PC-9 (cell line): ENCODE measurements at regions of chr11 and their contacts with region 1.

Region 1: DNA sequence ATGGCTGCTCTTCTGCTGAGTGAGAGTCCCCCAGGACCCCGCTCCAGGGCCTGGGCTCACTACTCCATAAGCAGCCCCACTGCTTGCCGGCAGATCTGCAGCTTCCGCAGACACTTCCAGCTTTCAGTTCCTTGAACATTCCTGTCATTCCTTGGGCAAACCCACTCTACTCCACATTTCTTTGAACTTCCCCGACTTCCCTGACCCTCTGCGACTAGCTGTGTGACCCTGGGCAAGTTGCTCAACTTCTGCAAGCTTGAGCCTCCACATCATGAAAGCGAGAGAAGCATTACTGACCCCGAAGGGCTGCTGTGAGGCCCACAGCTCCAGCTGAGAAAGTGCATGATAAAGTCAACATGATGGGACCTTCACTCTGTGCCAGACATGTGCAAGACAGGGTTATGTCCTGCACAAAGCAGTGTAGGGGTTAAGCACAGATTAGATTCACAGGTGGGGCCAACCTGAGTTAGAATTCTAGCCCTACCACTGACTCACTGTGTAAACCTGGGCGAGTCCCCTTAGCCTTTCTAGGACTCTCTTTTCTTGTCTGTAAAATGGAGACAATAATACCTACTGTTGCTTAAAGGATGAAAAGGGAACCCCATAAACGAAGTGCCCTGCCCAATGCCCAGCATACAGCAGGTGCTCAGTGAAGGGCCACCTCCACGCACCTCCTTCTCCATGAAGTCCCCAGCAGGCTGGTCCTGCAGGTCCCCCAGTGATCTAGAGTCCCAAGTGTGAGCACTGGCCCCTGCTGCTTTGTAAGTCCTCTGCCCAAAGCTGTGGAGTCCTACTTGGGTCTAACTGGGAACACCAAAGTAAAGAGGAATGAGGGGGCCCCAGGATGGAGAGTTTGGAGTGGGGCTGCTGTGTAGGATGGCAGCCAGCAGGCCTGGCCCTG is 51.6 kb downstream of the THAP12 start:
- DNase-seq: no peak
- H3K4me3 ChIP-seq: no peak overlapping the region
- H3K27ac ChIP-seq: no peak overlapping the region
- H3K4me1 ChIP-seq: no peaks in the 10 kb centered on the region
- H3K27me3 ChIP-seq: no peaks in the 10 kb centered on the region
- CTCF ChIP-seq: no peak

Region 2: GRCh38 chr11:76512851-76513653 is 183.7 kb after region 1 on chr11:
- CTCF ChIA-PET with region 1: no interaction called
- POLR2A ChIA-PET with region 1: no interaction called
- intact Hi-C with region 1: loop called (anchors 10 kb)
- DNase-seq: peak in 1 of 2 experiments; percentile 38
- H3K4me3 ChIP-seq: no peak overlapping the region
- H3K27ac ChIP-seq: 0 out of 2 replicates have a peak overlapping the region, but pooled peaks have one; percentile 8
- H3K4me1 ChIP-seq: no peaks in the 10 kb centered on the region
- H3K27me3 ChIP-seq: no peaks in the 10 kb centered on the region
- CTCF ChIP-seq: peak; percentile 69

Region 3: DNA sequence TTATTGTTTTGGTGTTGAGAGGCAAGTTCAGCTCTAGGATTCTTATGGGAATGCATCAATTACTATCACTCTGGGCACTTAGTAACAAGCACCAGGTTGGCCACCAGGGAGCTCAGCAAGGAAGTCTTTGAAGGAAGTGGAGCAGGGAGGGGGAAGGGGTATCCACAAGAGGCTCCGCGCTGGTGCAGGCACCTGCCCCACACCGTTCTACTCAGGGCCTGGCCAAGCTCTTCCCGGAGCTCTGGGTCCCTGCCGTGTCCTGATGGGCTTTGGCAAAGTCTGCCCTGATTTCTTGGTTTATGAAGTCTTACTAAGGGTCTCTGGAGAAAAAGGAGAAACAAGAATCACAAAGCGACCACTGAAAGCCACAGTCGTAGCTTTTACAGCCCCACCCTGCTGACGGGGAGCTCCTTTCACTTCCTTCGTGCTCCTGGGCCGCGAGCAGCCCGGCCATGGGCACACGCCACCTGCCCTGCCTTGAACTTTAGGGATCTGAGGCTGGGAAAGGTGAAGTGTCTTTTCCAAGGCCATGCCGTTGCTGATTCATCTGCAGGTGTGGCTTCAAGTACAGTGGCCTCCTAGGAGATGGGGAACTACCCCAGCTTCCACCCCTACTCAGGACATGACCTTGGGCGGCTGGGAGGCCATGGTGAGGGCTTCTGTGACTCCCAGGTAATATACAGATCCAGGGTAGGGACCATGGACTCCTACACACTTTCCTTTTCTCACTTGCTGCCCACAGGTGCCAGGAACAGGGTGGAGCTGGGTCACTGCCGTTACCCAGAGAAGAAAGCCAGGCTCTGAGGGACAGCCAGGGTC is 357.1 kb after region 1 on chr11:
- CTCF ChIA-PET with region 1: no interaction called
- POLR2A ChIA-PET with region 1: no interaction called
- intact Hi-C with region 1: no loop called
- DNase-seq: no peak
- H3K4me3 ChIP-seq: no peak overlapping the region
- H3K27ac ChIP-seq: no peak overlapping the region
- H3K4me1 ChIP-seq: no peaks in the 10 kb centered on the region
- H3K27me3 ChIP-seq: no peaks in the 10 kb centered on the region
- CTCF ChIP-seq: no peak

Region 4: GRCh38 chr11:78179459-78180069 is 1850.2 kb after region 1 on chr11:
- CTCF ChIA-PET with region 1: no interaction called
- POLR2A ChIA-PET with region 1: no interaction called
- intact Hi-C with region 1: no loop called
- DNase-seq: peak; percentile 66 to 86
- H3K4me3 ChIP-seq: no peak overlapping the region
- H3K27ac ChIP-seq: no peak overlapping the region
- H3K4me1 ChIP-seq: peaks cover 11% of the 10 kb centered on the region
- H3K27me3 ChIP-seq: no peaks in the 10 kb centered on the region
- CTCF ChIP-seq: no peak